ENCODE measurements at regions of chr15 and their contacts with region 1.

Region 1: DNA sequence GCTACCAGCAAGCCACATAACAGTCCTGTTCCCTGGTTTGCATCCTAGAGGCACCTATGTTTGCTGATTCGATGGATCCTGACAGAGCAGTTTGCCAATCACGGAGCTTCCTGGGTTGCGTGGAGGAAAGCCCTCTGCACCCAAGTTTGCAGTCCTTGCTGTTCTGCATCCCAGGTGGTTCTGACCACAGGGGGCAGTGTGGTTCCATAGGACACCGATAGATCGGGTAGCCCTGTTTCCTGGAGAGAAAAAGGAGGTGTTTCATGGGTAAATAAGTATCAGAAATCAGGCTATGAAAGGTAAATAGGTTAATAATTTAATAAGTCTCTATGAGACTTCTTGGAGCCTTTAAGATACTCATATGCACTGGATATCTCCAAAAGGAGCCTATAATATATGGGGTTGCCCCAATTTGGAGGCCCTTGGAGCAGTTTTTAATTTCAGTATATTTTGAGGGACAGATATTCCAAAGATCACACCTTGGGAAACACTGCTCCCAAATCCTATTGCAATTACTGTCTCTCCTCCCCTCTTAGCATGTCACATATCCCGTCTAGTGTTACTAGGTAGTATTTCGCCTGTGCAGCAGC is 194.6 kb upstream of the TPM1 start:
- DNase-seq: peak; percentile 80
- ATAC-seq: peak; percentile 66 to 69

Region 2: DNA sequence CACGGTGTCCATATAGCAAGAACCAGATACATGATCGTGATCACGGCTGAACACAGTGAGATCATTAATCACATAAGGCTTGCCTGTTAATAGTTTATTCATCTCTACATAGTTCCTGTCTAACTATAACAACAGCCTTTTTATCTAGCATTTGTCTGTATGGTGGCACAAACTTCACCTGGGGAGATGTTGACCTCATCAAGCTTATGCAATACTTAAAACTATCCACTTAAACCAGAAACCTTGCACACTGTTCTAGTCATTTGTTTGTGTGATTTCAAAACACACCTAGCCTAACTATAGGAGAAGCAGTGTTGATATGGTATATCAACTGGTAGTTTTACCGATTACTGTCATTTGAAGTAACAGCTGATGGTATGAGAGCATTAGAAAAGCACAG is 912.5 kb before region 1 on chr15:
- intact Hi-C with region 1: no loop called
- DNase-seq: no peak
- ATAC-seq: no peak

Region 3: DNA sequence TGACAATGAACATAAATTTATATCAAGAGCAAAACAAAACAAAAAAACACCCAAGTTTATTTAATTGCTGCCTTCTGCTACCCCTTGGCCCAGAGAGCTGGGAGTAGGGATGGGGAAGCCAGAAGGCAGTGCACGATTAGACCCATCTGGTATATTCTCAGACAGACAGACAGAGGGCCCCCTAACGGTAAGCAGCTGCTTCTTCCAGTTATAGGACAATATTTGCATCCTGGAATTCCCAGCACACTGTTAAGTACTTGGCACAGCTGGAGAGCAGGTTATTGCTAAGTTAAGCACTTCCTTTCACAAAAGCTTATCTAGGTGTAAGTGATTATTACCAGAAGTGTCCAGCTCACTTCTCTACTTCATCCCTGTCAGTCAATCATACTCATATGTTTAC is 722.2 kb before region 1 on chr15:
- intact Hi-C with region 1: no loop called
- DNase-seq: no peak
- ATAC-seq: peak; percentile 79 to 84

Region 4: DNA sequence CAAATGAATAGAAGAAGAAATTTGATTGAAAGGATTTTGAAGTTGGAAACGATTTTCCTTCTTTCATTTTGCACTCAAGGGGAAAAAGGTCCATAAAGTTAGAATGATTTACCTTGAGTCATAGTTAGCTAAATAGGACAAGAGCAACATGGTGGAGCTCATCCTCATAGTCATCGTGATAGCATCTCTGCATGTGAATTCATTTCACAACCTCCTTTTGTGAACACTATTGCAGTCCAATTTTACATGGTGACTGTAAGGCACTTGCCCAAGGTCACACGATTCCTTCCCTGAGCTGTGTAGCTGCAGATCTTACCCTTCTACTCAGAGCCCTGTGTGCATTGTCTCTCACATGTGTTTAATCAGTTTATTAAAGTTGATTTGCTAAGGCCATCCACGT is 323.1 kb before region 1 on chr15:
- intact Hi-C with region 1: no loop called
- DNase-seq: no peak
- ATAC-seq: no peak

Region 5: GRCh38 chr15:62896978-62897647 is 49.1 kb after region 1 on chr15:
- intact Hi-C with region 1: loop called in 1 of 2 experiments (anchors 10 kb)
- DNase-seq: peak; percentile 92
- ATAC-seq: peak; percentile 88 to 90

Region 6: DNA sequence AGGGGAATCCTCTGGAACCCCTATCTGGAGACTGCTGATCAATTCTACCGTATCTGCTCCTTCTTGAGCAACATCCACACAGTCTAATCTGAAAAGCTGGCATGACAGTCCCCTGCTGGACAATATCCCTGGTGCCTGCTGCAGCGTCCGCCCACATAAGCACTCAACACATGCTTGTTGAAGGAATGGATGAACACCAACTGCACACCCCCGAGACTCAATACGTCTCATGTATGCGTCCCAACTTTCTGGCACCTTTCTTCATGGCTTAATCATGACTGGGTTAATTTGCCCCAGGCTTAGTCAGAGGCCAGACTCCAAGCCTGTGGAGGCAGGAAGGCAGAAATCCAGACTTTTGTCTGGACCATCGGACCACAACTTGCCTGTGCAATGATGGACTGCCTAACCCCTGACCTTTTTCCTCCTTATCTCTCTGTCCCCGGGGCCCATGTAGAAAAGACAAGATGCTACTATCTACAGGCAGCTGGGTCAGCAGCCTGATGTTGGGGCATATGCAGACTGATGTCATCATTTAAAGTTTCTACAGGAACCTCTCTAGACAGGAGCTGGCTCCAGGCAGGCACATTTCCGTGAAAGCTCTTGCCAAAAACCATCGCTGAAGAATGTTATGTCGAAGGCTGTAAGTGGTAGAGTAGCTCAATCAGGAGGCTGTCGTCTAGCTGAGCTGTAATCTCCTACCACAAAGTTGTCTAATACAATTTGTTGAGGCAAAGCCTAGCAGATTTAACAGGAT is 80.4 kb after region 1 on chr15:
- intact Hi-C with region 1: loop called in 1 of 2 experiments (anchors 10 kb)
- DNase-seq: peak; percentile 61
- ATAC-seq: peak; percentile 84 to 90

Region 7: DNA sequence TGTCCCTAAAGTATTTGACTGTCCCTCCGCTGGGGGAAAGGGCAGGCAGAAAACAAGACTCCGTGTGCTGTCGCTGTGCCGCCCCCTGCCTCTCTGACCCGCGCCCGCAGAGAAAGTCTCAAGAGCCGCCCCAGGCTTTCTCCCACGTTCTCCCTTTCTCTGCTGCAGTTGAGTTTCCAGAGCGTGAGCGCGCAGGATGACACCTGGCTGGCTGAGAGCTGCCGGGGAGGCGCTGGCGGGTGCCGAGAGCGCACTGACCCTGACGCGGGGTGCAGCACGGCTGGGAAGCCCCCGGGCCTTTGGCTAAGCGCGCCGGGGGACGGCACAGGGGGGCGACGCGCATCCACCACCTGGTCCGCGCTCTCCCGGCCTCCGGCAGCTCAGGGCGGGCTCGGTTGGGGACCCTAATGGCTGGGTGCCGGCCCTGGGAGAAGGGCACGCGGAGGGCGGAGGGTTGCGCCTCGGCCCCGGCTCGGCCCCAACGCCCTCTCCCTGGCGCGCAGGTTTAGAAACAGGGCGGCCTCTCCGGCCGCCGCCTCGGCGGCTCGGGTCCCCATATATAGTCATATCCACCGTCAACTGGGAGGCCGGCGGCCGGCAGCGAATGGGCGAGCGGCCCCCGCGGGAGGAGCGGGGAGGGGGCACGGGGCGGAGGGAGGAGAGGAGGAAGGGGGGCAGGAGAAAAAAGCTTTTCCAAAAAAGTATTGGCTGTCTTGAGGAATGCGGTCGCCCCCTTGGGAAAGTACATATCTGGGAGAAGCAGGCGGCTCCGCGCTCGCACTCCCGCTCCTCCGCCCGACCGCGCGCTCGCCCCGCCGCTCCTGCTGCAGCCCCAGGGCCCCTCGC is 194.2 kb after region 1 on chr15 and contains the start of gene TPM1:
- intact Hi-C with region 1: loop called (anchors 5 kb)
- DNase-seq: peak; percentile 87
- ATAC-seq: peak; percentile 82 to 87
- total RNA-seq, gene TPM1: 8,049 to 9,104 TPM

Region 8: DNA sequence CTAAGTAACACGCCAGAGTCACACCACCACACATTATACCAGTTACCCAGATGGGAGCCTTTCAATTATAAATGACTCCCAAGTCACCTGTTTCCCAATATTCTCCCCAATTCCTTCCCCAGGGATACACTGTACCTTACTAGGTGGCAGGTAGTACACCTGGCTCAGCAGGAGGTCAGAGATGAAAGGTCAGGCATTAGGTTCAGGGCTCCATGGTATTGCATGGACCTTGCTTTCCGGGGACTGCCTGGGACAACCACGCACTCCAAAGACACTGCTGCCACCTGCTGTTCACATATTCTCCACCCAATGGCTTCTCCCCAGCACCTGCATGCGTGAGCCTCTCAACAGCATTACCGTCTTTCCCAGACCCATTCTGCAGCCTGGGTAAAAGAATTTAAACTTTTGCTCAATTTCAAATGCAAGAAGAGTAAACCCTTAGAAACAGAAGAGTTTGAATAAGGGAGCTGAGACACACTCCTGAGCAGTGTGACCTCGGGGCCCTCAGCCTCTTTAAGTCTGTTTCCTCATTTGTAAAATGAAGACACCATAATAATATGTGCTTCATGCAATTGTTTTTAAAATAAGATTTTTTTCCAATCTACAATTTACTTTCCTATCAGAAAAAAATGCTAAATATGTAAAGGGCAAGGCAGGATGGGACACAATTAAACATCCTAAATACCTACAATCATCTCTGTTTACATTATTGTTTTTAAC is 245.7 kb after region 1 on chr15:
- intact Hi-C with region 1: loop called (anchors 1 to 5 kb)
- DNase-seq: peak; percentile 78
- ATAC-seq: peak; percentile 93

Measured in left cardiac atrium (tissue), 4 donors.